CD8-positive, alpha-beta T cell (primary cell): ENCODE measurements at regions of chr12 and their contacts with region 1.

Region 1: DNA sequence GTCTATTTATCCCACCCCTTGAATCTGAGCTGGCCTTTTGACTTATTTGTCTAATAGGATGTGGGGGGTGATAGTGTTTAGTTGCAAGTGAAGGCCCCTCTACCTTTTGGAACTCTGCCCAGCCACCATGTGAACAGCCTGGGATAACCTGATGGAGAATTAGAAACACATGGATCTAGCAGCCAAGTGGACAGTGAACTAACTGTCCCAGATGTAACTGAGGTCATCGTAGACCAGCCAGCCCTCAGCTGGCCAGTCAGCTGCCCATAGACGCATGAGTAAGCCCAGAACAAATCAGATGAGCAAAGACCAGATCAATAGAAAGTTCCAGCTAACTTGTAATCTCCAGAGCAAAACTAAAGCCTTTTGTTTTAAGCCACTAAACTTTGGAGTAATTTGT is 19.0 kb downstream of the KLRB1 start:
- DNase-seq: no peak
- ATAC-seq: no peak
- H3K4me3 ChIP-seq: no peak overlapping the region
- H3K4me3 Mint-ChIP-seq: no peak overlapping the region
- H3K27ac ChIP-seq: no peak overlapping the region
- H3K27ac Mint-ChIP-seq: no peak overlapping the region
- H3K4me1 ChIP-seq: no peaks in the 10 kb centered on the region
- H3K4me1 Mint-ChIP-seq: no peaks in the 10 kb centered on the region
- H3K27me3 ChIP-seq: no peaks in the 10 kb centered on the region
- H3K27me3 Mint-ChIP-seq: no peaks in the 10 kb centered on the region
- CTCF ChIP-seq: no peak

Region 2: GRCh38 chr12:9604287-9604686 is 15.5 kb after region 1 on chr12:
- CTCF ChIA-PET with region 1: no interaction called
- POLR2A ChIA-PET with region 1: no interaction called
- intact Hi-C with region 1: loop called in 1 of 2 experiments (anchors 1 kb)
- DNase-seq: peak in 2 of 9 experiments; percentile 9 to 35
- ATAC-seq: no peak
- H3K4me3 ChIP-seq: no peak overlapping the region
- H3K4me3 Mint-ChIP-seq: peak overlapping the region; percentile 49
- H3K27ac ChIP-seq: peak overlapping the region in 1 of 2 experiments; percentile 29
- H3K27ac Mint-ChIP-seq: peak overlapping the region; percentile 42
- H3K4me1 ChIP-seq: peaks cover 12% of the 10 kb centered on the region
- H3K4me1 Mint-ChIP-seq: peaks cover 13% of the 10 kb centered on the region
- H3K27me3 ChIP-seq: no peaks in the 10 kb centered on the region
- H3K27me3 Mint-ChIP-seq: no peaks in the 10 kb centered on the region
- CTCF ChIP-seq: no peak